ENCODE measurements at regions of chr12 and their contacts with region 1.

Region 1: GRCh38 chr12:92570056-92570753 is 132.6 kb upstream of the PLEKHG7 start:
- DNase-seq: peak; percentile 86
- ATAC-seq: peak; percentile 91
- H3K4me3 ChIP-seq: peak overlapping the region in 3 of 5 experiments; percentile 30 to 55 (median 53)
- H3K4me3 Mint-ChIP-seq: no peak overlapping the region
- H3K27ac ChIP-seq: peak overlapping the region; percentile 29 to 75
- H3K27ac Mint-ChIP-seq: no peak overlapping the region
- H3K4me1 ChIP-seq: peaks cover 23 to 25% of the 10 kb centered on the region in 2 donors
- H3K4me1 Mint-ChIP-seq: peaks cover 26% of the 10 kb centered on the region
- H3K27me3 ChIP-seq: no peaks in the 10 kb centered on the region
- H3K27me3 Mint-ChIP-seq: no peaks in the 10 kb centered on the region
- CTCF ChIP-seq: peak; percentile 99

Region 2: DNA sequence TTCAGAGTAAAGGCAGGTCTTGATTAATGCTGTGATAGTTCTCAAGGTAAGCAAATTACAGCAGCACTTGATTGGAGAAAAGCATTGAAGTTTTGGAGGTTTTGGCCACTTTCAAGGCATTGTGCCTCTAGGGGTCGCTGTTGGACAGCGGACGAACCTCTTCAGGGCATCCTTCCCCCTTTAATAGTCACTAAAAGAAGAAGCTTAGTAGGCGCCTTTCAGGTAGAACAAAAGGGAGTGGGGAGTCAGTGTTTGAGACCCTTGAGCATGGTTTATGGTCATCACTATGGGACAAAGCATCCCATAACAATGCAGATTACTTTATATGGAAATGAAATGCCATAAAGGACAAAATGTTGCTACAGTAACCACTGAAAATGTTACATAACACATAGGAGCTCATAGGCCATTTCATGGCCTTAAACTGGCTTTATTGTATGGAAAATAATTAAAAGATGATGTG is 1188.1 kb before region 1 on chr12:
- CTCF ChIA-PET with region 1: interaction called, 48 read pairs
- POLR2A ChIA-PET with region 1: interaction called, 3 read pairs
- intact Hi-C with region 1: loop called (anchors 1 kb)
- DNase-seq: peak; percentile 89
- ATAC-seq: peak; percentile 82
- H3K4me3 ChIP-seq: peak overlapping the region; percentile 11 to 81 (median 47)
- H3K4me3 Mint-ChIP-seq: peak overlapping the region; percentile 83
- H3K27ac ChIP-seq: peak overlapping the region in 1 of 2 donors; percentile 20
- H3K27ac Mint-ChIP-seq: peak overlapping the region; percentile 28
- H3K4me1 ChIP-seq: peaks cover 5 to 9% of the 10 kb centered on the region in 2 donors
- H3K4me1 Mint-ChIP-seq: peaks cover 10% of the 10 kb centered on the region
- H3K27me3 ChIP-seq: no peaks in the 10 kb centered on the region
- H3K27me3 Mint-ChIP-seq: peaks cover 8% of the 10 kb centered on the region
- CTCF ChIP-seq: peak; percentile 91

Region 3: DNA sequence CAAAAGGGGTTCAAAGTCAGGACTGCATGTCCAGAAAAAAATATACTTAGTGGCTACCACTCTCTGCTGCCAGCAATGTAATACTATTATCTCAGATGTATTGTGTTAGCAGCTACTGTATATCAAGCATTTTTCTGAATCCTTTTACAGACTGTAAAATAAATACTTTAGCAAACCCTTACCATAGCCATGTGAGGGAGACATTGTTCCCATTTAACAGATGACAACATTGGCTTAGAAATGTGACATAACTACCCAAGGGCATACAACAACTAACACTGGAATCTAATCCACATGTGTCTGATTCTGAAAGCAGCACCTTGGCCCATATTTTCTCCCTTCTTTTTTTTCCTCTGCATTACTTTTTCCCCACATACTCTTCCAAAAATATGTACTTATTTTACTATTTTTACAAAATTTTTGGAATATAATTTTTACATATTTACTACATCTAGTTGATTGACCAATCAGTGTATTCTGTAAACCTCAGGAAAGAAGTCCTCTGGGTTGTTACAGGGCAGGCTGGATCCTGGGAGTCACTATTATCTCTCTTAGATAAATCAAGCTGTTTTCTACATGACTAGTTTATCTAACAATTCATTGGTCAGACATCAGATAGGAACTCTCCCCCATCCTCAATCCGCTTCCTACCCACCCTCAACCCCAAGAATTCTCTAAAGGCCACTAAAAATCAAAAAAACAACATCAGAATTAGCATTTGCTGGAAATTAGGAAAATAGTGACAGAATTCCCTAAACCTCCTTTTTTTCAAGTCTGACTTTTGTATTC is 578.6 kb before region 1 on chr12:
- CTCF ChIA-PET with region 1: interaction called, 31 read pairs
- POLR2A ChIA-PET with region 1: no interaction called
- intact Hi-C with region 1: loop called (anchors 1 kb)
- DNase-seq: peak; percentile 58
- ATAC-seq: peak; percentile 61
- H3K4me3 ChIP-seq: no peak overlapping the region
- H3K4me3 Mint-ChIP-seq: no peak overlapping the region
- H3K27ac ChIP-seq: no peak overlapping the region
- H3K27ac Mint-ChIP-seq: no peak overlapping the region
- H3K4me1 ChIP-seq: no peaks in the 10 kb centered on the region
- H3K4me1 Mint-ChIP-seq: peaks cover 3% of the 10 kb centered on the region
- H3K27me3 ChIP-seq: no peaks in the 10 kb centered on the region
- H3K27me3 Mint-ChIP-seq: no peaks in the 10 kb centered on the region
- CTCF ChIP-seq: peak; percentile 34

Region 4: DNA sequence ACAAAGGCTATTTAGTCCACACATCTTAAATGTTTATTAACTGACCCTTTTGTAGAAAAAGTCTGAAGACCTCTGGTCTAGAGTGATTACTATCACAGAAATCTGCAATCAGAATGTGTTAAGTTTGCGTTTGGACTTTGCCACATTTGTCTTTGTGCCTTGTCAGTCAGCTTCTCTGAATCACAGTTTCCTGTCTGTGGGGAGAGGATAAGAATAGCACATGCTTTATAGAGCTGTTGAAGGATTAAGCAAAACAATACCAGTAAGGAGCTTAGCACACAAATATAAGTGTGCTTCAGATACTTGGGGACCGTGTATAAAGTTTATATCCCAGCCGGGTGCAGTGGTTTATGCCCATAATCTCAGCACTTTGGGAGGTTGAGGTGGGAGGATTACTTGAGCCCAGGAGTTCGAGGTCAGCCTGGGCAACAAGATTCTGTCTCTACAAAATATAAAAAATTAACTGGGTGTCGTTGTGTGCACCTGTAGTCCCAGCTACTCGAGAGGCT is 361.5 kb before region 1 on chr12:
- CTCF ChIA-PET with region 1: interaction called, 10 read pairs
- POLR2A ChIA-PET with region 1: no interaction called
- intact Hi-C with region 1: no loop called
- DNase-seq: peak; percentile 45
- ATAC-seq: peak; percentile 88
- H3K4me3 ChIP-seq: peak overlapping the region; percentile 7 to 64 (median 13)
- H3K4me3 Mint-ChIP-seq: peak overlapping the region; percentile 81
- H3K27ac ChIP-seq: peak overlapping the region; percentile 9 to 52
- H3K27ac Mint-ChIP-seq: peak overlapping the region; percentile 83
- H3K4me1 ChIP-seq: peaks cover 20 to 26% of the 10 kb centered on the region in 2 donors
- H3K4me1 Mint-ChIP-seq: peaks cover 31% of the 10 kb centered on the region
- H3K27me3 ChIP-seq: no peaks in the 10 kb centered on the region
- H3K27me3 Mint-ChIP-seq: no peaks in the 10 kb centered on the region
- CTCF ChIP-seq: no peak

Region 5: DNA sequence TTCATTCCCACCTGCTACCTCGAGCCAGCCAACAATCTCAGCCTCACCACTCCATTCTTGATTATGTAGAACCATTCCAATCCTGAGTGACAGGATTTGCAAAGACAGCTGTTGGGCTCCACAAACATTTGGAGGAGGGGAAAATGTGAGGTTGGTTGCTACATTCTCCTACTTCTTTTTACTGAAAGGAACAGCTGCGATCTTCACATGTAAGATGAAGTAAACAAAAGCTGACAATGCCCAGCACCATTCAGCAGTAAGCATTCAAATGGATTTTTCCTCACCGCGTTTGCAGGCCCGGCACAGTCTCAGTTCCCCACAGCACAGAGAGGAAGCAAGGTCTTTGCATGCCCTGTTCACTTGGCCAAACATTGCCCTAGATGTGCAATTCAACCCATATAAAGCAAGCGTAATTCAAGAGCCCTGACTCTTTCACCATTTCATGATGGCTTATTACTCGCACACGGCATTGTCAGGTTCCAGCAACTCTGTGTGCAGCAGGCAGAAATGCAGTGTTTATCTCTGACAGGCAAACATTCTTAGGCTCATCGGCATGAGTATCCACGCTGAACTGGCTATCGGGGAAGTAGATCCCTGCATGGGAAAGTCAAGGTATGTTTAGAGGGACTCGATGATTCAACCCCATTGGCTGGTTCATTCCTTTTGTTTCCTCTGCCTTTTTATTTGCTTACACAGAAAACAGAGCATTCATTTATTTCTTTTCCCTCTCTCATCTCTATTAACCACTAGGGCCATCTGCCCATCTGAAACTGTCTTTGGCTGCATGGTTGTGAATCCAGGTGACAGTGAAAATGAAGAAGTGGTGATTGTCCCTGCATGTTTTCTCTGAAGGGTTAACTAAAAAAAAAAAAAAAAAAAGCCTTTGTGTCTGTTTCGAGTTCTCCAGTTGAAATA is 103.6 kb before region 1 on chr12:
- CTCF ChIA-PET with region 1: interaction called, 14 read pairs
- POLR2A ChIA-PET with region 1: interaction called, 4 read pairs
- intact Hi-C with region 1: loop called (anchors 1 kb)
- DNase-seq: peak; percentile 87
- ATAC-seq: peak; percentile 76
- H3K4me3 ChIP-seq: peak overlapping the region; percentile 61 to 93 (median 68)
- H3K4me3 Mint-ChIP-seq: peak overlapping the region; percentile 94
- H3K27ac ChIP-seq: peak overlapping the region; percentile 85 to 93
- H3K27ac Mint-ChIP-seq: peak overlapping the region; percentile 95
- H3K4me1 ChIP-seq: peaks cover 80 to 83% of the 10 kb centered on the region in 2 donors
- H3K4me1 Mint-ChIP-seq: peaks cover 81% of the 10 kb centered on the region
- H3K27me3 ChIP-seq: no peaks in the 10 kb centered on the region
- H3K27me3 Mint-ChIP-seq: no peaks in the 10 kb centered on the region
- CTCF ChIP-seq: no peak

Region 6: DNA sequence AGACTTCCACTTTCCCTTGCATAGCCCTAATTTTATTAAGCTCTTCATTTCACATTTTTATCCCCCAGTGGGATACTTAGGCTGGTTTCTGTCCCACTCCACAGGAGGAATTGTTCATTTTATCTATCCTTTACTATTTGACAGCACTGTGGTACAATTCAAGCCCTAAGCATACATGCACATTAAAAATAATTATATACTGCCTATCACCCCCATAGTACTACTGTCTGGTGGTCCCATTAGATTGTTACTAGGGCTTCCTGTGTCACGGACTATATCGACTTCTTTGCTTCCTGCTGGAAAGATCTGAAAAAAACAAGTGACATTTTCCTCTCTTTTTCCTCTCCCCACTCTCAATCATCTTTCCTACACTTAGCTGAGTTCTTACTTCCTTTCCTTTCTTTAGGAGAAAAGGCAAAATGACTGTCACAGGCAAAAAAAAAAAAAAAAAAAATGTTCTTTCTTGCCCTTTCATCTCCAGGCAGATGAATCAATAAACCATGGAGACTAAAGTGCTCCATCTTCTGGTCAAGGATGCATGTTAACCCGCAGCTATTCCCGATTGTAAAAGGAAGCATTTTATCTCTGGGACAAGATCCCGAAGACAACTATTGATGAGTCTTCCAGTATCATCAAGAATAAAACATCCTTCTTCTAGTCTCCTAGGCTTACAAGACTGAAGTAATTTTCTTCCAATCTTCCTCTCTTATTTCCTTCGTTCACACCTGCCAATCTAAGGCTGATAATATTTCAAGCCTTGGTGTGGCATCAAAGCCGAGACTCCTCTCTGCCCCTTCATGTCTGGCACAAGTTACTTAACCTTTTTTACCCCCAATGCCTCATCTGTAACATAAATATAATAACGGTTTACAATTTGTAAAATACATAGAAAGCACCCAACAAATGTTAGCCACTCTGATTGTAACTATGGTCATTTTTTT is 38.2 kb after region 1 on chr12:
- CTCF ChIA-PET with region 1: interaction called, 24 read pairs
- POLR2A ChIA-PET with region 1: no interaction called
- intact Hi-C with region 1: loop called (anchors 5 kb)
- DNase-seq: peak; percentile 60
- ATAC-seq: no peak
- H3K4me3 ChIP-seq: no peak overlapping the region
- H3K4me3 Mint-ChIP-seq: peak overlapping the region; percentile 33
- H3K27ac ChIP-seq: no peak overlapping the region
- H3K27ac Mint-ChIP-seq: no peak overlapping the region
- H3K4me1 ChIP-seq: no peaks in the 10 kb centered on the region
- H3K4me1 Mint-ChIP-seq: peaks cover 11% of the 10 kb centered on the region
- H3K27me3 ChIP-seq: no peaks in the 10 kb centered on the region
- H3K27me3 Mint-ChIP-seq: no peaks in the 10 kb centered on the region
- CTCF ChIP-seq: no peak